Activated CD8-positive, alpha-beta T cell treated with anti-CD3 and anti-CD28 coated beads, Interleukin-2, amount 10 ng/mL, durations not matched to agents 7 days and 5 days (primary cell): ENCODE measurements at regions of chr17 and their contacts with region 1.

Region 1: DNA sequence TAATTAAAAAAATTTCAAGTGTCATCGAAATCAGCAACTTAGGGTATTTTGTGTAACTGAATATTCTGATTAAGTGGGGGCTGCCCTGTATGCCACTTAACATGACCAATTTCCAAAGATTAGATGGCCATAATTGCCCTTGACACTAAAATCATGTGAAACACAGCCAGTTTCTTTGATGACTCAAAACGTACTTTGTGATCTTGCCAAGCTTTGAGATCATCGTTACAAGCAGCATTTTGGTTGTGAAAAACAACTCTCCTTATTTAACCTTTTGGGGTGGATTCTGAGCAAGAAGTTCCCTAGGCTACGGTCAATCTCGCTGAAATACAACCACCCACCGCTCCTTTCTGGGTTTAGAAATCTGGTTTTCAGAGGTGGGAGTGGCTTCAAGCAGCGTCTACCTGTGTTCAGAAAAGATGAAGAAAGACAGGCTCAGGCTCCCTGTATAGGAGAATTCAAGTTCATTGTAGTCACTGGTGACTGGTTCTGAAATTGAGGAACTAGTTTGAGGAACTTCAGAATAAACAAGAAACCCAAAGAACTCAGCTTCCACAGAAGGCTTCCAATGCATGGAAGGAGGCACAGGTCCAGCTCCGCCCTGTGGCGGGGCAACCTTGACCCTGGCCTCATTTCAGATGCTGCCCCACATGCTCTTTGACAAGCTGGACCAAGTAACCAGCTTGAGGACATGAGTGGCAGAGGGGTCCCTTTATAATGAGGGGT is 9.4 kb downstream of the MAP3K14 start:
- DNase-seq: peak; percentile 56
- ATAC-seq: peak; percentile 30
- H3K4me3 Mint-ChIP-seq: no peak overlapping the region
- H3K27ac Mint-ChIP-seq: peak overlapping the region; percentile 82
- H3K4me1 Mint-ChIP-seq: peaks cover 82% of the 10 kb centered on the region
- H3K27me3 Mint-ChIP-seq: no peaks in the 10 kb centered on the region

Region 2: GRCh38 chr17:45190503-45191255 is 116.8 kb before region 1 on chr17:
- CTCF ChIA-PET with region 1: no interaction called
- POLR2A ChIA-PET with region 1: no interaction called
- DNase-seq: no peak
- ATAC-seq: no peak
- H3K4me3 Mint-ChIP-seq: no peak overlapping the region
- H3K27ac Mint-ChIP-seq: no peak overlapping the region
- H3K4me1 Mint-ChIP-seq: no peaks in the 10 kb centered on the region
- H3K27me3 Mint-ChIP-seq: no peaks in the 10 kb centered on the region

Region 3: DNA sequence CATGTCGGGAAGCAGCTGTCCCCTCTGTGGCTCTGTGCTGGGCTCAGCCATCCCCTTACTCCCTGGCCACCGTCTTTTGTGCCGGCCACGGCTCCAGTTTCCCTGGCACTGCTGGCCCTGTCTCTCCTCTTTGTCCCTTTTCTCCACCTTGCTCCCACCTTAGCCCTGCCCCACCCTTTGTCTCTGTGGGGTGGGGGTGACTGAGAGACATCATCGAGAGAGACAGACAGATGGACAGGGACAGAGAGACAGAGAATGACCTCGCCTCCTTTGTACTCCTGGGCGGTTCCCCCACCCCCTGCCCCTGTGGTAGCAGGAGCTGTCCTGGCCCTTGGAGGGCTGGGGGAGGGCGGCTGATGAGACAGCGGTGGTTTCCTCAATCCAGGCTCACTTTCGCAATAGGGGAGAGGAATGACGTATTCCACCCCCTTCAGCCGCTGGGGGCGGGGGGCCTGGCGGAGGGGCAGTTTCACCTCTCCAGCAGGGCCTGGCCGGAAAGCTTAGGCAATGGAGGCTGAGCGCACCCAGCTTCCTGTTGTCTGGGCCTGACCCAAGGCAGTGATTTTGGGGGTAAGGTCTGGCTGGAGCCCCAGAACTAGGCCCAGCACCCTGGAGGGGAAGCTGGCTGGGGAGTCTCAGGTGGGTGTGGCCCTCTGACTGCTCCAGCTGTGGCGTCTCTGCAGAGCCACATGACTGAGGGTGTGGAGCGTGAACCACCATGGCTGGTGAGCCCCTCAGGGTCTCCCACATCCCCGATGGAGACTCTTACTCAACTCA is 78.5 kb before region 1 on chr17:
- CTCF ChIA-PET with region 1: interaction called, 4 read pairs
- POLR2A ChIA-PET with region 1: interaction called, 22 read pairs
- DNase-seq: peak; percentile 83
- ATAC-seq: peak; percentile 41
- H3K4me3 Mint-ChIP-seq: peak overlapping the region; percentile 100
- H3K27ac Mint-ChIP-seq: peak overlapping the region; percentile 94
- H3K4me1 Mint-ChIP-seq: peaks cover 93% of the 10 kb centered on the region
- H3K27me3 Mint-ChIP-seq: no peaks in the 10 kb centered on the region

Region 4: DNA sequence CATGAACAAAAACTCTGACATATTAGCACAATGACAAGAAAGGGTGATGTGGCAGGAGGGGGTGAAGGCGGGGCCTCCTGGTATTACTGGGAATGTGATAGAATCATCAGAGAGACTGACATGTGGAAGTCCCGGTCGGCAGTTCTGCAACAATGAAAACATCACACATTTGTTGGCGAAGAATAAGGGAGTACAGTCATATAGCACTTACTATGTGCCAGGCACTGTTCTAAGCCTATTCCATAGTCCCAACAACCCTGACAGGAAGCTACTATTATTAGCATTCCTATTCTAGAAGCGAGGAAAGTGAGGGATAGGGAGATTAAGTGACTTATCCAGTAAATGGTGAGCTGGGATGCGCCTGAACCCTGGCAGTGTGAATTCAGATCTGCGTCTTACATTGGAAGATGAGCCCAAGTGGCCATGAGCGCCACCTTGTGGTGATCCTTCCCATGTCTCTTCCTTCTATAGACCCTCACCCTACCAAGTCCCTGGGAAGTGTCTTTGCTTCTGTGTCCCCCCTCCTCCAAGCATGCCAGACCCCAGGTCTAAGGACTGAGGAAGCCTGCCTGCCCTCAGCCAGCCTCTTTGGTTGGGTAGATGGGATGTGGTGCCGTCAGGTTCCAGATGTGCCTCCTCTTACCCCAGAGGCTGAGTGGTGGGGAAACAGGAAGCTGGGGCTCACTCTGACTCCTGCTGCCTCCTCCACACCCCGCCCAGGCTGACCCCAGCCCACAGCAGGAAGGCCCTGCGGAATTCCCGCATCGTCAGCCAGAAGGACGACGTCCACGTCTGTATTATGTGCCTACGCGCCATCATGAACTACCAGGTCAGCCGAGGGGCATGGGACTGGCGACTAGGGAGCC is 71.8 kb before region 1 on chr17:
- CTCF ChIA-PET with region 1: interaction called, 12 read pairs
- POLR2A ChIA-PET with region 1: interaction called, 3 read pairs
- DNase-seq: peak; percentile 86
- ATAC-seq: peak; percentile 68
- H3K4me3 Mint-ChIP-seq: no peak overlapping the region
- H3K27ac Mint-ChIP-seq: peak overlapping the region; percentile 60
- H3K4me1 Mint-ChIP-seq: peaks cover 62% of the 10 kb centered on the region
- H3K27me3 Mint-ChIP-seq: no peaks in the 10 kb centered on the region

Region 5: DNA sequence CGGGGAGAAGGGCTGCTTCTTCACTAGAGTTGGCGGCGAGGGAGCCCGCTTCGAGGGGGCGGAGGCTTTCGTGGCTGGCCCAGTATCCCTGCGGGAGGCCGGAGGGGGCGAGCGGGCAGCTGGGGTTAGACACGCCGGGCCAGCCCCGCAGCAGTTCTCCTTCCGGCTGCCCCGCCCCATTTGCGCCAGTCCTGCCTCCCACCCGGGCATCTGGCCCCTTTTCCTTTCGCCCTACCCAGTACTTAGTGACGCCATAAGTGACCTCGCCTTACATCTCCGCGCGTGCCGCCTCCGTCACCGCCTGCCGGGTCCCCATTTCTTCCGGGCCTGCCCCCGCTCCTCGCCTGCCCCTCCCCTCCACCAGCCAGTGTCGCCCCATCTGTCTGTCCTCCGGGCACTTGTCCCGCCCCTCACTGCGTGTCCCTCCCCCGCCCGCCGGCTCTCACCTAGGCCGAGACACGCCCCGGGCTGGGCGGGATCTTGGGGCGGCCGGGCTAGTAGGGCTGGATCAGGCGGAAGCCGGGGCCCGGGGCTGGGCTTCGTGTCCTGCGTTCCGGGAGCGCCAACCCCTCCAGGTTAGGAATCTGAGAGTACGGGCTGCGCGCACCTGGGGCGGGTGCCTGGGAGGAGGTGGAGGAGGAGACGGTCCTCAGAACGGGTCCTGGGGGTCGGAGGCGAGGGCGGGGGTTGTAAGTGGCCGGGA is 59.9 kb before region 1 on chr17:
- CTCF ChIA-PET with region 1: interaction called, 3 read pairs
- POLR2A ChIA-PET with region 1: interaction called, 17 read pairs
- DNase-seq: peak; percentile 99
- ATAC-seq: peak; percentile 92
- H3K4me3 Mint-ChIP-seq: peak overlapping the region; percentile 91
- H3K27ac Mint-ChIP-seq: peak overlapping the region; percentile 97
- H3K4me1 Mint-ChIP-seq: peaks cover 75% of the 10 kb centered on the region
- H3K27me3 Mint-ChIP-seq: no peaks in the 10 kb centered on the region

Region 6: GRCh38 chr17:45284176-45285140 is 23.0 kb before region 1 on chr17:
- CTCF ChIA-PET with region 1: interaction called, 69 read pairs
- POLR2A ChIA-PET with region 1: interaction called, 6 read pairs
- DNase-seq: peak; percentile 42
- ATAC-seq: peak; percentile 53
- H3K4me3 Mint-ChIP-seq: no peak overlapping the region
- H3K27ac Mint-ChIP-seq: peak overlapping the region; percentile 77
- H3K4me1 Mint-ChIP-seq: peaks cover 26% of the 10 kb centered on the region
- H3K27me3 Mint-ChIP-seq: no peaks in the 10 kb centered on the region

Region 7: GRCh38 chr17:45293413-45294211 is 13.8 kb before region 1 on chr17:
- CTCF ChIA-PET with region 1: interaction called, 17 read pairs
- POLR2A ChIA-PET with region 1: interaction called, 13 read pairs
- DNase-seq: no peak
- ATAC-seq: no peak
- H3K4me3 Mint-ChIP-seq: no peak overlapping the region
- H3K27ac Mint-ChIP-seq: peak overlapping the region; percentile 67
- H3K4me1 Mint-ChIP-seq: peaks cover 88% of the 10 kb centered on the region
- H3K27me3 Mint-ChIP-seq: no peaks in the 10 kb centered on the region

Region 8: DNA sequence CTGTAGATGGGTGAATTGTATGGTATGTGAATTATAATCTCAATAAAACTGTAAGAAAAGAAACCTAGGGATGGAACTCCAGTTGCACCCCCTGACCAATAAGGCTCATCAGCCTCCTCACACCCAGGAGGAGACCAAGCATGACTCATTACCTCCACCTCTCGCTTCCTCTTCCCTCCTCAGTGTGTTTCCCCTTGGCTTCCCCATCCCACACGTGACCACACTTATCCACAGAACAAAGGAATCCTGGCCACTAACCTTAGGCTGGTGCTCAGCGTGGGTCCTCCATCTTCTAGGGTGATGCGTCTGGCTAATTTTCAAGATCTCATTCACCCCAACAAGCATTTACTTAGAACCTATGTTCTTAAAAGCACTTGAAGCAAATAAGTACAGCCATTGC is 45.6 kb after region 1 on chr17:
- CTCF ChIA-PET with region 1: no interaction called
- POLR2A ChIA-PET with region 1: no interaction called
- DNase-seq: peak; percentile 37
- ATAC-seq: peak; percentile 67
- H3K4me3 Mint-ChIP-seq: no peak overlapping the region
- H3K27ac Mint-ChIP-seq: no peak overlapping the region
- H3K4me1 Mint-ChIP-seq: peaks cover 10% of the 10 kb centered on the region
- H3K27me3 Mint-ChIP-seq: peaks cover 26% of the 10 kb centered on the region

Region 9: GRCh38 chr17:45372328-45372869 is 64.9 kb after region 1 on chr17:
- CTCF ChIA-PET with region 1: no interaction called
- POLR2A ChIA-PET with region 1: no interaction called
- DNase-seq: no peak
- ATAC-seq: no peak
- H3K4me3 Mint-ChIP-seq: no peak overlapping the region
- H3K27ac Mint-ChIP-seq: no peak overlapping the region
- H3K4me1 Mint-ChIP-seq: peaks cover 13% of the 10 kb centered on the region
- H3K27me3 Mint-ChIP-seq: peaks cover 16% of the 10 kb centered on the region

Region 10: GRCh38 chr17:45385331-45385997 is 78.0 kb after region 1 on chr17:
- CTCF ChIA-PET with region 1: interaction called, 22 read pairs
- POLR2A ChIA-PET with region 1: no interaction called
- DNase-seq: peak; percentile 93
- ATAC-seq: peak; percentile 95
- H3K4me3 Mint-ChIP-seq: no peak overlapping the region
- H3K27ac Mint-ChIP-seq: peak overlapping the region; percentile 74
- H3K4me1 Mint-ChIP-seq: peaks cover 33% of the 10 kb centered on the region
- H3K27me3 Mint-ChIP-seq: peaks cover 5% of the 10 kb centered on the region

Region 11: DNA sequence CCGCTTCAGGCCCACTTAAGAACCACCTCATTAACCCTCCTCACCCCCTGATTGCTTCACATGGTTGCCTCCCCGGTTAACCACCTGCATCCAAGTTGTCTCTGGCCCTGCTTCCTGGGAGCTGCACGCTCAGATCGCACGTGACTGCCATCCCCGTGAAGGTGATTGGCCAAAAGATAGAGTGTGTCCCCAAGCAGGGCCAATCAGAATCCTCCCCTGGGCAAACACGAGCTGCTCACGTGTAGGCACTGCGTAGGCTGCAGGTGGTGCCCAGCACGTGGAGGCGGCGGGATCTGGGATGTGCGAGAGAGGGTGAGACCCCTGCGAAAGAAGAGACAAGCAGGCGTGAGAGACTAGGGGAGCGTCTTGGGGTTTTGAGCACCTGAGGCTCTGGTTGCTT is 364.8 kb after region 1 on chr17:
- CTCF ChIA-PET with region 1: no interaction called
- POLR2A ChIA-PET with region 1: no interaction called
- DNase-seq: no peak
- ATAC-seq: no peak
- H3K4me3 Mint-ChIP-seq: no peak overlapping the region
- H3K27ac Mint-ChIP-seq: no peak overlapping the region
- H3K4me1 Mint-ChIP-seq: no peaks in the 10 kb centered on the region
- H3K27me3 Mint-ChIP-seq: peaks cover 2% of the 10 kb centered on the region